Activated B cell treated with CpG ODN at 0.5 μM for 24 hours (primary cell): ENCODE measurements at regions of chr2 and their contacts with region 1.

Region 1: GRCh38 chr2:241217320-241218031 is 29.0 kb downstream of the ANO7 start:
- DNase-seq: peak; percentile 53
- ATAC-seq: peak; percentile 73
- H3K4me3 Mint-ChIP-seq: peak overlapping the region; percentile 83
- H3K27ac Mint-ChIP-seq: peak overlapping the region; percentile 73
- H3K4me1 Mint-ChIP-seq: peaks cover 10% of the 10 kb centered on the region
- H3K27me3 Mint-ChIP-seq: no peaks in the 10 kb centered on the region
- CTCF ChIP-seq: no peak

Region 2: DNA sequence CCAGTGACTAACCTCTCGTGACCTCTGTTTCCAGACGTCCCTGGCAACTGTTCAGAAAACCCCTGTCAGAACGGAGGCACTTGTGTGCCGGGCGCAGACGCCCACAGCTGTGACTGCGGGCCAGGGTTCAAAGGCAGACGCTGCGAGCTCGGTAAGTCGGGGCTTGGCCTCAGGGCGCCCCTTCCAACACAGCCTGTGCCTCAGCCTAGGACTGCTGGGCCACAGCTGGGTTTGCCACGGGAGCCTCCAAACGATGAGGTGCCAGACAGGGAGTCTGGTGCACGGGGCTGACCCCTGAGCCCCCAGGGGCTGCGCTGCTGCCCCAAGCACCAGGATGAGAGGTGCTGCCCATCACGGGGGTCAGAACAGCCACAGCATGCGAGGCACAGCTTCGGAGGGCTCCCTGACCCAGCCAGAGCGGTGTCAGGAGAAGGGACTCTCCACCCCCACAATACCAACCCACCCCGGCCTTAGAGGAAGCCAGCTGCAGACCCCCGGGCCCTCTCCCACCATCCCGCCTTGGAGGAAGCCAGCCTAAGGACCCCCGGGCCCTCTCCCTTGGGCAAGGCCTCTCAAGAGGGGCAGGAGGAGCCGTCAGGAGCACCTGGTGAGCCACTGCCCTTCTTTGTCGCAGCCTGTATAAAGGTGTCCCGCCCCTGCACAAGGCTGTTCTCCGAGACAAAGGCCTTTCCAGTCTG is 135.7 kb before region 1 on chr2:
- CTCF ChIA-PET with region 1: interaction called, 5 read pairs
- POLR2A ChIA-PET with region 1: interaction called, 3 read pairs
- intact Hi-C with region 1: loop called (anchors 1 kb)
- DNase-seq: no peak
- ATAC-seq: no peak
- H3K4me3 Mint-ChIP-seq: no peak overlapping the region
- H3K27ac Mint-ChIP-seq: no peak overlapping the region
- H3K4me1 Mint-ChIP-seq: peaks cover 12% of the 10 kb centered on the region
- H3K27me3 Mint-ChIP-seq: no peaks in the 10 kb centered on the region
- CTCF ChIP-seq: no peak

Region 3: DNA sequence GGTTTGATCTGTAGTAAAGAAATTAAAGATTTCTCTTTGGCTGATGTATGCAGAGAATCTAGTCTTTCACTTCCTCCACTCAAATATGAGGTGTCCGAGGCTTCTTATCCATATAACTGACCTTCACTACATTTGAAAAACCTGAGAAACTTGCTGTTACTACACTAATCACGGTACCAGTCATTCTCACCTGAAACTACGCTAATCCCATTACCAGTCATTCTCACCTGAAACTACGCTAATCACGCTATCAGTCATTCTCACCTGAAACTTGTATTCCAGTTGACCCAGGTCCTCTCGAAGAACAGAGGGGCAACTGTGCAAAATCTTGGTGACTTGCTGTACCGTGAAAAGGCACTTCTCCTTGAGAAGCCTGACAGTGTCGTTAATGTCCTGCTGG is 120.5 kb before region 1 on chr2:
- CTCF ChIA-PET with region 1: no interaction called
- POLR2A ChIA-PET with region 1: no interaction called
- intact Hi-C with region 1: loop called (anchors 5 kb)
- DNase-seq: no peak
- ATAC-seq: no peak
- H3K4me3 Mint-ChIP-seq: no peak overlapping the region
- H3K27ac Mint-ChIP-seq: no peak overlapping the region
- H3K4me1 Mint-ChIP-seq: peaks cover 68% of the 10 kb centered on the region
- H3K27me3 Mint-ChIP-seq: no peaks in the 10 kb centered on the region
- CTCF ChIP-seq: no peak